Endothelial cell of umbilical vein (primary cell): ENCODE measurements at regions of chr1 and their contacts with region 1.

Region 1: DNA sequence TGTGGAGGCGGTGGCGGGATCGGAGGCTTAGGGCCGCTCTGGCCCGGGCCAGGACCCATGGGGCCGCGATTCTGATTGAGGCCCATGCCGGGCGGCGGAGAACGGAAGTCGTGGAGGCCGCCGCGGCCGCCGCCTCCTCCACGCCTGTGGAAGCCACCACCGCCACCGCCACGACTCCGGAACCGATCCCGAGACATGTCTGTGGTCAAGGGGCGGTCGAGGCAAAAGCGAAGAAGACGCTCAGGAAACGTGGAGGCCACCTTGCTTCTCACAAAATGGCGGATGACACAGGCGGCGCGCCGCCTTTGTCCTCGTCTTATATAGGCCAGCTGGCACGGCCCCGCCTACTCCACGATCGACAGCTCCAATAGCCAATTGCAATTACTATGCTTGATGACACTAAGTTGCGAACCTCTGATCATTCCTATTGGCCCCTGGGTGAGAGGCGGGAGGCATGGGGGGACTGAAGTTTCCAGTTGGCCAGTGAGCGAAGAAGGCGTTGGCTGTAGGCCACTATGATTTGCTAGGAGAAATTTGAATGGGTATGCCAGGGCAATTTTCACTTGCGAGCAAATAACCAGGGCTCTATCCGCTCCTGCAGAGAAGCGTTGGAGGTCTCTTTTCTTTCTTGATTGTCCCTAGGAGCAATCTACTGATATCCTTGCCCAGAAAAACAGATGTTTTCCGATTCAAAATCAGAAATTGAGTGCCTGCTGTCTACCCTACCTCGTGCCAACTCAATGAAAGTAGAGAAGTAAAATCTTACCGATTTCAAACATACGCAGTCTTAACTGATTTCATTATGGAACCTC is at the start of gene SFPQ:
- DNase-seq: peak; percentile 99
- H3K4me3 ChIP-seq: peak within 1 kb of the TSS; percentile 54 to 99 (median 97)
- H3K27ac ChIP-seq: peak within 1 kb of the TSS; percentile 62
- H3K4me1 ChIP-seq: peaks cover 25% of the 10 kb centered on the region
- H3K27me3 ChIP-seq: no peaks in the 10 kb centered on the region
- CTCF ChIP-seq: no peak
- POLR2A ChIP-seq: peak; percentile 100
- total RNA-seq, gene SFPQ: 413 and 415 TPM in 2 replicates

Region 2: GRCh38 chr1:34859446-34860200 is 333.4 kb before region 1 on chr1 and contains the start of gene SMIM12:
- CTCF ChIA-PET with region 1: no interaction called
- POLR2A ChIA-PET with region 1: no interaction called
- dilution Hi-C with region 1: no loop called
- intact Hi-C with region 1: loop called (anchors 2 kb)
- DNase-seq: peak; percentile 93
- H3K4me3 ChIP-seq: peak within 1 kb of the TSS; percentile 30 to 98 (median 74)
- H3K27ac ChIP-seq: peak within 1 kb of the TSS; percentile 81
- H3K4me1 ChIP-seq: peaks cover 8% of the 10 kb centered on the region
- H3K27me3 ChIP-seq: peaks cover 6 to 14% of the 10 kb centered on the region in 2 experiments
- CTCF ChIP-seq: peak; percentile 87 to 89
- POLR2A ChIP-seq: peak; percentile 86
- total RNA-seq, gene SMIM12: 54.7 and 66.2 TPM in 2 replicates

Region 3: DNA sequence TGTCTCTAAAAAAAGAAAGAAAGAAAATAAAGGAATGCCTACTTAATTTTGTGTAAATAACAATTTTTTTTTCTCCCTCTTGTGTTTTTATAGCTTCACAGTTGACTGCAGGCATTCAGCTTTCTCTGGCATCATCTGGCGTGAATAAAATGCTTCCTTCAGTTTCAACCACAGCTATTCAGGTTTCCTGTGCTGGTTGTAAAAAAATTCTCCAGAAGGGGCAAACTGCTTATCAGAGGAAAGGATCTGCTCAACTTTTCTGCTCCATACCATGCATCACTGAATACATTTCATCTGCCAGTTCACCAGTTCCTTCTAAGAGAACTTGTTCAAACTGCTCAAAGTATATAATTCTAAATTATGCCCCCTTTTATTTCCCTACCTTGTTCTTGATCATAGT is 95.8 kb before region 1 on chr1:
- CTCF ChIA-PET with region 1: no interaction called
- POLR2A ChIA-PET with region 1: no interaction called
- dilution Hi-C with region 1: no loop called
- intact Hi-C with region 1: no loop called
- DNase-seq: peak; percentile 60
- H3K4me3 ChIP-seq: no peak overlapping the region
- H3K27ac ChIP-seq: no peak overlapping the region
- H3K4me1 ChIP-seq: no peaks in the 10 kb centered on the region
- H3K27me3 ChIP-seq: no peaks in the 10 kb centered on the region
- CTCF ChIP-seq: no peak
- POLR2A ChIP-seq: no peak

Region 4: GRCh38 chr1:35181790-35182455 is 11.1 kb before region 1 on chr1:
- CTCF ChIA-PET with region 1: interaction called, 3 read pairs
- POLR2A ChIA-PET with region 1: interaction called, 4 read pairs
- dilution Hi-C with region 1: no loop called
- intact Hi-C with region 1: loop called (anchors 1 kb)
- DNase-seq: no peak
- H3K4me3 ChIP-seq: no peak overlapping the region
- H3K27ac ChIP-seq: no peak overlapping the region
- H3K4me1 ChIP-seq: peaks cover 17% of the 10 kb centered on the region
- H3K27me3 ChIP-seq: no peaks in the 10 kb centered on the region
- CTCF ChIP-seq: no peak
- POLR2A ChIP-seq: no peak

Region 5: DNA sequence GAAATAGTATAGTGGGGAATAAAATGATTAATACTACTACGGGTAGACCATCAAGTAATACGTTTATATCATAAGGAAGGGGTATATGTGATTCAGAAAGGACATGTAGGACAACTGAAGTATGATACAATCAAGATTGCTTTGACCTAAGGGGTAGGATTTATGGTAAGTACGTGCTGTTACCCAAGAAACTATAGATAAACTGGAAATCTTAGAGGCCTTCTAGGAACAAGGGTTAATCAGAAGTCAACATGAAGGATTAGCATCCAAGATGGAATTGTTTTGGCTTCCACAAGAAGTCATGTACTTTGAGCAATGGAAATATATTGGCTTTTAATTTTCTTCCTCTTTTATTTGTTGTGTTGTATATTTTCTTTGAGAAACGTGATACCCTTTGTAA is 62.2 kb after region 1 on chr1:
- CTCF ChIA-PET with region 1: no interaction called
- POLR2A ChIA-PET with region 1: no interaction called
- dilution Hi-C with region 1: no loop called
- intact Hi-C with region 1: no loop called
- DNase-seq: no peak
- H3K4me3 ChIP-seq: no peak overlapping the region
- H3K27ac ChIP-seq: no peak overlapping the region
- H3K4me1 ChIP-seq: no peaks in the 10 kb centered on the region
- H3K27me3 ChIP-seq: no peaks in the 10 kb centered on the region
- CTCF ChIP-seq: no peak
- POLR2A ChIP-seq: no peak

Region 6: GRCh38 chr1:35298464-35298863 is 105.4 kb after region 1 on chr1:
- CTCF ChIA-PET with region 1: no interaction called
- POLR2A ChIA-PET with region 1: no interaction called
- dilution Hi-C with region 1: no loop called
- intact Hi-C with region 1: loop called (anchors 2 kb)
- DNase-seq: peak; percentile 60
- H3K4me3 ChIP-seq: no peak overlapping the region
- H3K27ac ChIP-seq: no peak overlapping the region
- H3K4me1 ChIP-seq: no peaks in the 10 kb centered on the region
- H3K27me3 ChIP-seq: no peaks in the 10 kb centered on the region
- CTCF ChIP-seq: peak; percentile 25 to 40
- POLR2A ChIP-seq: no peak

Region 7: GRCh38 chr1:35557292-35558063 is 364.4 kb after region 1 on chr1 and contains the starts of genes KIAA0319L and NCDN:
- CTCF ChIA-PET with region 1: no interaction called
- POLR2A ChIA-PET with region 1: no interaction called
- dilution Hi-C with region 1: no loop called
- intact Hi-C with region 1: loop called (anchors 5 kb)
- DNase-seq: peak; percentile 97
- H3K4me3 ChIP-seq: peak within 1 kb of the TSS; percentile 46 to 59 (median 53)
- H3K27ac ChIP-seq: peak within 1 kb of the TSS; percentile 65
- H3K4me1 ChIP-seq: peaks cover 6% of the 10 kb centered on the region
- H3K27me3 ChIP-seq: no peaks in the 10 kb centered on the region
- CTCF ChIP-seq: no peak
- POLR2A ChIP-seq: peak; percentile 89
- total RNA-seq, gene KIAA0319L: 43.4 and 45.3 TPM in 2 replicates
- total RNA-seq, gene NCDN: 22.0 and 22.3 TPM in 2 replicates

Region 8: GRCh38 chr1:36223993-36224536 is 1031.0 kb after region 1 on chr1 and contains the start of gene THRAP3:
- CTCF ChIA-PET with region 1: no interaction called
- POLR2A ChIA-PET with region 1: no interaction called
- dilution Hi-C with region 1: no loop called
- intact Hi-C with region 1: loop called (anchors 5 kb)
- DNase-seq: peak; percentile 100
- H3K4me3 ChIP-seq: peak within 1 kb of the TSS; percentile 74 to 99 (median 78)
- H3K27ac ChIP-seq: peak within 1 kb of the TSS; percentile 89
- H3K4me1 ChIP-seq: peaks cover 17% of the 10 kb centered on the region
- H3K27me3 ChIP-seq: no peaks in the 10 kb centered on the region
- CTCF ChIP-seq: no peak
- POLR2A ChIP-seq: peak; percentile 93
- total RNA-seq, gene THRAP3: 130 and 144 TPM in 2 replicates

Region 9: GRCh38 chr1:36576118-36576517 is 1383.1 kb after region 1 on chr1:
- CTCF ChIA-PET with region 1: no interaction called
- POLR2A ChIA-PET with region 1: no interaction called
- dilution Hi-C with region 1: no loop called
- intact Hi-C with region 1: no loop called
- DNase-seq: peak; percentile 49
- H3K4me3 ChIP-seq: no peak overlapping the region
- H3K27ac ChIP-seq: no peak overlapping the region
- H3K4me1 ChIP-seq: no peaks in the 10 kb centered on the region
- H3K27me3 ChIP-seq: no peaks in the 10 kb centered on the region
- CTCF ChIP-seq: peak; percentile 71 to 93
- POLR2A ChIP-seq: no peak